Naive thymus-derived CD4-positive, alpha-beta T cell (primary cell): ENCODE measurements at regions of chr19 and their contacts with region 1.

Region 1: GRCh38 chr19:50383852-50384684 is at the start of gene POLD1:
- DNase-seq: peak; percentile 98 to 100 (median 99)
- ATAC-seq: peak; percentile 96
- H3K4me3 ChIP-seq: peak within 1 kb of the TSS; percentile 74
- H3K4me3 Mint-ChIP-seq: peak within 1 kb of the TSS; percentile 91 to 99 (median 94)
- H3K27ac ChIP-seq: peak within 1 kb of the TSS; percentile 75
- H3K27ac Mint-ChIP-seq: peak within 1 kb of the TSS; percentile 80 to 97 (median 94)
- H3K4me1 ChIP-seq: peaks cover 3 to 7% of the 10 kb centered on the region in 2 donors
- H3K4me1 Mint-ChIP-seq: peaks cover 16 to 51% (median 35%) of the 10 kb centered on the region in 7 donors
- H3K27me3 ChIP-seq: no peaks in the 10 kb centered on the region
- H3K27me3 Mint-ChIP-seq: no peaks in the 10 kb centered on the region
- total RNA-seq, gene POLD1: 26.0 to 110 (median 40.8) TPM

Region 2: DNA sequence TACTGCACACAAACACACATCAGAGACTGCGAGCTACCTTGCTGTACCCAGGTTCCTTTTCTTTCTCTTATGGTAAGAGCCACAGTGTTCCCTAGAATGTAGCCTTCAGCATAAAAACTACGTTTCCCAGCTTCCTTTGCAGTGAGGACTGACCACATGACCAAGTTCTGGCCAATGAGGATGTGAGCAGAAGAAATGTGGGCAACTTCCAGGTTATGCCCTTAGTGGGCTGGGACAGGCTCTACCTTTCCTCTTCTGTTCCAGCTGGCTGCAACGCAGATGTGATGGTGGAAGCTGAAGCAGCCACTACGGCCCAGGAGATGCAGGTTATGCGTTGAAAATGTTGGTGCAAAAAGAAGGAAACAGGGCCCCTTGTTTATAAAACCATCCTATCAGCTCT is 386.4 kb before region 1 on chr19:
- CTCF ChIA-PET with region 1: no interaction called
- POLR2A ChIA-PET with region 1: no interaction called
- intact Hi-C with region 1: no loop called
- DNase-seq: peak in 3 of 9 donors; percentile 6 to 21 (median 21)
- ATAC-seq: peak; percentile 77
- H3K4me3 ChIP-seq: no peak overlapping the region
- H3K4me3 Mint-ChIP-seq: no peak overlapping the region
- H3K27ac ChIP-seq: no peak overlapping the region
- H3K27ac Mint-ChIP-seq: no peak overlapping the region
- H3K4me1 ChIP-seq: no peaks in the 10 kb centered on the region
- H3K4me1 Mint-ChIP-seq: peaks cover 0 to 4% (median 0%) of the 10 kb centered on the region in 7 donors
- H3K27me3 ChIP-seq: no peaks in the 10 kb centered on the region
- H3K27me3 Mint-ChIP-seq: no peaks in the 10 kb centered on the region

Region 3: GRCh38 chr19:50329146-50329925 is 54.7 kb before region 1 on chr19 and contains the start of gene KCNC3:
- CTCF ChIA-PET with region 1: no interaction called
- POLR2A ChIA-PET with region 1: no interaction called
- intact Hi-C with region 1: loop called (anchors 1 kb)
- DNase-seq: peak in 8 of 9 donors; percentile 69 to 96 (median 86)
- ATAC-seq: peak; percentile 77
- H3K4me3 ChIP-seq: peak within 1 kb of the TSS; percentile 39
- H3K4me3 Mint-ChIP-seq: peak within 1 kb of the TSS; percentile 72 to 97 (median 86)
- H3K27ac ChIP-seq: no peak within 1 kb of the TSS
- H3K27ac Mint-ChIP-seq: peak within 1 kb of the TSS; percentile 55 to 96 (median 87)
- H3K4me1 ChIP-seq: peaks cover 42 to 62% of the 10 kb centered on the region in 2 donors
- H3K4me1 Mint-ChIP-seq: peaks cover 43 to 75% (median 73%) of the 10 kb centered on the region in 7 donors
- H3K27me3 ChIP-seq: peaks cover 15 to 28% of the 10 kb centered on the region in 2 donors
- H3K27me3 Mint-ChIP-seq: peaks cover 20 to 62% (median 41%) of the 10 kb centered on the region in 5 donors
- total RNA-seq, gene KCNC3: 1.9 to 11.1 (median 2.4) TPM

Region 4: GRCh38 chr19:50414864-50415660 is 31.0 kb after region 1 on chr19:
- CTCF ChIA-PET with region 1: no interaction called
- POLR2A ChIA-PET with region 1: no interaction called
- intact Hi-C with region 1: loop called in 1 of 2 experiments (anchors 2 kb)
- DNase-seq: peak; percentile 45 to 79 (median 66)
- ATAC-seq: peak; percentile 85
- H3K4me3 ChIP-seq: no peak overlapping the region
- H3K4me3 Mint-ChIP-seq: no peak overlapping the region
- H3K27ac ChIP-seq: no peak overlapping the region
- H3K27ac Mint-ChIP-seq: no peak overlapping the region
- H3K4me1 ChIP-seq: no peaks in the 10 kb centered on the region
- H3K4me1 Mint-ChIP-seq: peaks cover 8 to 15% (median 9%) of the 10 kb centered on the region in 7 donors
- H3K27me3 ChIP-seq: no peaks in the 10 kb centered on the region
- H3K27me3 Mint-ChIP-seq: peaks cover 8 to 17% (median 11%) of the 10 kb centered on the region in 5 donors

Region 5: DNA sequence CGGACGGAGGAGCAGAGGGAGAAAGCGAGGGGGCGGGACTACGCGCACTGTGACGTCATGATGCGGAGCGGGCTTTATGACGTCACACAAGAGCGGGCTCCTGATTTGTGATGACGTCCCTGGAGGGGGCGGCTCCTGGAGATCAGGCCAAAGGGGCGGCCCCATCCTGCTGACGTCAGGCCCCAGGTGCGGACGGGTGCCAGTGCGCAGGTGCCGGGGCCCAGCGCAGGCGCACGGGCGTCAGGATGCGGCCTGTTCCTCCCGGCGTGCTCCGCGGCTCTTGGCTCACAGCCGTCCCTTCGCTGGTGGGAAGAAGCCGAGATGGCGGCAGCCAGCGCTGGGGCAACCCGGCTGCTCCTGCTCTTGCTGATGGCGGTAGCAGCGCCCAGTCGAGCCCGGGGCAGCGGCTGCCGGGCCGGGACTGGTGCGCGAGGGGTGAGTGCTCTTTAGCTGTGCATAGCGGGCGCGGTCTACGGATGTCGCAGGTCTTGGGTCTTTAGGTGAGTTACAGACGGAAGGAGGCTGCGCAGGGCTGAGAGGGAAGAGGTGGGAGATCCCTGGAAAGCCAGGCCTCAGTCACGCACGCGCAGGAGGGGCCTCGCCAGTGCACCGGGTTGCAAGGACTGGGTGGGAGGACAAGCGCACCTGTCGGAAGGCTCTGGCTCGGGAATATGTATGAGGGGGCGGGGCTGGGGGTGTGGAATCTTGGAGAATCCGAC is 92.3 kb after region 1 on chr19 and contains the starts of genes EMC10 and GARIN5A:
- CTCF ChIA-PET with region 1: no interaction called
- POLR2A ChIA-PET with region 1: no interaction called
- intact Hi-C with region 1: loop called in 1 of 2 experiments (anchors 1 kb)
- DNase-seq: peak; percentile 92 to 96 (median 95)
- ATAC-seq: peak; percentile 97
- H3K4me3 ChIP-seq: peak within 1 kb of the TSS; percentile 96
- H3K4me3 Mint-ChIP-seq: peak within 1 kb of the TSS; percentile 94 to 99 (median 98)
- H3K27ac ChIP-seq: peak within 1 kb of the TSS; percentile 96
- H3K27ac Mint-ChIP-seq: peak within 1 kb of the TSS; percentile 88 to 98 (median 96)
- H3K4me1 ChIP-seq: peaks cover 14 to 19% of the 10 kb centered on the region in 2 donors
- H3K4me1 Mint-ChIP-seq: peaks cover 21 to 36% (median 27%) of the 10 kb centered on the region in 7 donors
- H3K27me3 ChIP-seq: no peaks in the 10 kb centered on the region
- H3K27me3 Mint-ChIP-seq: no peaks in the 10 kb centered on the region
- total RNA-seq, gene EMC10: 75.5 to 95.2 (median 88.1) TPM
- total RNA-seq, gene GARIN5A: 0.59 to 0.93 (median 0.68) TPM in 4 of 5 experiments, not detected in the other

Region 6: GRCh38 chr19:50724522-50725217 is 340.6 kb after region 1 on chr19:
- CTCF ChIA-PET with region 1: no interaction called
- POLR2A ChIA-PET with region 1: no interaction called
- intact Hi-C with region 1: loop called (anchors 1 to 10 kb)
- DNase-seq: peak; percentile 74 to 99 (median 94)
- ATAC-seq: peak; percentile 93
- H3K4me3 ChIP-seq: peak overlapping the region; percentile 62
- H3K4me3 Mint-ChIP-seq: peak overlapping the region; percentile 79 to 92 (median 84)
- H3K27ac ChIP-seq: peak overlapping the region; percentile 66
- H3K27ac Mint-ChIP-seq: peak overlapping the region in 8 of 9 donors; percentile 34 to 87 (median 70)
- H3K4me1 ChIP-seq: peaks cover 5 to 12% of the 10 kb centered on the region in 2 donors
- H3K4me1 Mint-ChIP-seq: peaks cover 0 to 34% (median 24%) of the 10 kb centered on the region in 7 donors
- H3K27me3 ChIP-seq: peaks cover 5 to 12% of the 10 kb centered on the region in 2 donors
- H3K27me3 Mint-ChIP-seq: peaks cover 47 to 70% (median 53%) of the 10 kb centered on the region in 5 donors